ENCODE measurements at regions of chr9 and their contacts with region 1.

Region 1: GRCh38 chr9:128034821-128035764 is 32.0 kb downstream of the NAIF1 start:
- DNase-seq: peak; percentile 78 to 82 (median 80)
- H3K4me3 ChIP-seq: no peak overlapping the region
- H3K4me3 Mint-ChIP-seq: peak overlapping the region; percentile 11 to 84 (median 64)
- H3K27ac ChIP-seq: peak overlapping the region; percentile 15
- H3K27ac Mint-ChIP-seq: peak overlapping the region; percentile 87 to 95 (median 92)
- H3K4me1 ChIP-seq: peaks cover 51% of the 10 kb centered on the region
- H3K4me1 Mint-ChIP-seq: peaks cover 19 to 46% (median 32%) of the 10 kb centered on the region in 4 donors
- H3K27me3 ChIP-seq: no peaks in the 10 kb centered on the region
- H3K27me3 Mint-ChIP-seq: no peaks in the 10 kb centered on the region

Region 2: GRCh38 chr9:127785023-127785932 is 249.8 kb before region 1 on chr9:
- CTCF ChIA-PET with region 1: no interaction called
- POLR2A ChIA-PET with region 1: interaction called, 3 read pairs
- intact Hi-C with region 1: loop called (anchors 10 kb)
- DNase-seq: peak; percentile 89 to 93 (median 90)
- H3K4me3 ChIP-seq: peak overlapping the region in 1 of 2 donors; percentile 61
- H3K4me3 Mint-ChIP-seq: peak overlapping the region; percentile 80 to 93 (median 86)
- H3K27ac ChIP-seq: peak overlapping the region; percentile 86
- H3K27ac Mint-ChIP-seq: peak overlapping the region; percentile 93 to 99 (median 97)
- H3K4me1 ChIP-seq: peaks cover 68% of the 10 kb centered on the region
- H3K4me1 Mint-ChIP-seq: peaks cover 34 to 74% (median 49%) of the 10 kb centered on the region in 4 donors
- H3K27me3 ChIP-seq: no peaks in the 10 kb centered on the region
- H3K27me3 Mint-ChIP-seq: no peaks in the 10 kb centered on the region

Region 3: GRCh38 chr9:127937388-127938280 is 97.5 kb before region 1 on chr9 and contains the start of gene DPM2:
- CTCF ChIA-PET with region 1: interaction called, 216 read pairs
- POLR2A ChIA-PET with region 1: interaction called, 130 read pairs
- intact Hi-C with region 1: no loop called
- DNase-seq: peak; percentile 85 to 89 (median 87)
- H3K4me3 ChIP-seq: peak within 1 kb of the TSS; percentile 37 to 73
- H3K4me3 Mint-ChIP-seq: peak within 1 kb of the TSS; percentile 88 to 98 (median 91)
- H3K27ac ChIP-seq: peak within 1 kb of the TSS; percentile 75
- H3K27ac Mint-ChIP-seq: peak within 1 kb of the TSS; percentile 89 to 97 (median 97)
- H3K4me1 ChIP-seq: peaks cover 37% of the 10 kb centered on the region
- H3K4me1 Mint-ChIP-seq: peaks cover 23 to 53% (median 41%) of the 10 kb centered on the region in 4 donors
- H3K27me3 ChIP-seq: no peaks in the 10 kb centered on the region
- H3K27me3 Mint-ChIP-seq: no peaks in the 10 kb centered on the region
- total RNA-seq, gene DPM2: 37.0 to 39.7 TPM

Region 4: DNA sequence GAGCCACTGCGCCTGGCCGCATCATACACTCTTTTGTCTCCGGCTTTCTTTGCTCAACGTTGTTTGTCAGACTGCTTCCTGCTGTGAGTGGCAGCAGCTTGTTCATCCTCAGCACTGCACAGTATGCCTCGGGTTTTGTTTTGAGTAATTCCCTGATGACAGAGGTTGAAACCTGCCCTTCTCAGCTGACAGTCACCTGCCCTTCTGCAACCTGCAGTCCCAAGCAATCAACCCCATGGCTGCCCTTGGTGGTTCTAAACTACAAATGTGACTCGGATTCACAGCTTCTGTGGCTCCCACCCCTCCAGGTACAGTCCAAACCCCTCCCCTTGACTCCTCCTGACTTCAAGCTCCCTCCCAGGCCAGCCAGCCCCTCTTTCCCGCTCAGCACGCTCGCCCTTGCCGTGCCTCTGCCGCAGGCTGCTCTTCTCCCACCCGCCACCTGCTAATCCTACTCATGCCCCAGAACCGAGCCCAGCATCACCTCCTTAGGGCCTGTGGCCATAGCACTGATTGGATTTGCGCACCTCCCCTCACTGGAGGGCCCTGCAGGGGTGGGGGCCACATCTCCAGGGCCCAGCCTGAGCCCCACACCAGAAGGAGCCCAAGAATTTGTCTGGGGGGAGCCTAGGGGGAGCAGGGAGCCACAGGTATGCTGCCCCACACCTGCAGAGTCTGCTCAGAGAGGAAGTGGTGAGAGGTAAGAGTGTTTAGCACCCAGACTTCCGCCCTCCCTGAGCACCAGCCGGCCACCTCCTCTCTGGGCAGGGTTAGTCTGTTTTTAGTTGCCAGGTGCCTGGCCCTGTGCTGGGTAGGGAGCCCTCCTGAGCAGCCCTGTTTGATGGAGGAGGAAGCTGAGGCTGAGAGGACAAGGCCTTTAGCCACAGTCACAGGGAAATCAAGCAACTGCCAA is 64.4 kb before region 1 on chr9:
- CTCF ChIA-PET with region 1: interaction called, 182 read pairs
- POLR2A ChIA-PET with region 1: interaction called, 1,317 read pairs
- intact Hi-C with region 1: loop called (anchors 1 kb)
- DNase-seq: peak; percentile 72 to 89 (median 73)
- H3K4me3 ChIP-seq: peak overlapping the region; percentile 61 to 76
- H3K4me3 Mint-ChIP-seq: peak overlapping the region; percentile 78 to 98 (median 93)
- H3K27ac ChIP-seq: peak overlapping the region; percentile 78
- H3K27ac Mint-ChIP-seq: peak overlapping the region; percentile 81 to 99 (median 97)
- H3K4me1 ChIP-seq: peaks cover 100% of the 10 kb centered on the region
- H3K4me1 Mint-ChIP-seq: peaks cover 73 to 100% (median 87%) of the 10 kb centered on the region in 4 donors
- H3K27me3 ChIP-seq: no peaks in the 10 kb centered on the region
- H3K27me3 Mint-ChIP-seq: no peaks in the 10 kb centered on the region

Region 5: GRCh38 chr9:128001779-128002298 is 33.3 kb before region 1 on chr9:
- CTCF ChIA-PET with region 1: interaction called, 12 read pairs
- POLR2A ChIA-PET with region 1: interaction called, 313 read pairs
- intact Hi-C with region 1: loop called (anchors 1 kb)
- DNase-seq: no peak
- H3K4me3 ChIP-seq: no peak overlapping the region
- H3K4me3 Mint-ChIP-seq: no peak overlapping the region
- H3K27ac ChIP-seq: no peak overlapping the region
- H3K27ac Mint-ChIP-seq: peak overlapping the region in 3 of 7 donors; percentile 19 to 68 (median 65)
- H3K4me1 ChIP-seq: peaks cover 37% of the 10 kb centered on the region
- H3K4me1 Mint-ChIP-seq: peaks cover 13 to 50% (median 32%) of the 10 kb centered on the region in 4 donors
- H3K27me3 ChIP-seq: no peaks in the 10 kb centered on the region
- H3K27me3 Mint-ChIP-seq: no peaks in the 10 kb centered on the region

Region 6: DNA sequence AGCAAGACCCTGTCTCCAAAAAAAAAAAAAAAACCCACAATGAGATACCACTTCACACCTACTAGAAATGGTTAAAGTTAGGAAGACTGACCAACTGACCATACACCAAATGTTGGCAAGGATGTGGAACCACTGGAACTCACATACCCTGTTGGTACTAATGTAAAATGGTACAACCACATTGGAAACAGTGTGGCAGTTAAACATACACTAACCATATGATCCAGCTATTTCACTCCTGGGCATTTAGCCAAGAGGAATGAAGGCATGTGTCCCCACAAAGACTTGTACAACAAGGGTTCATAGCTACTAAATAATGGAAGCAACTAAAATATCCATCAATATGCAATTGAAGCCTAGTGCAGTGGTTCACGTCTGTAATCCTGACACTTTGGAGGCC is 10.7 kb after region 1 on chr9:
- CTCF ChIA-PET with region 1: interaction called, 13 read pairs
- POLR2A ChIA-PET with region 1: interaction called, 3 read pairs
- intact Hi-C with region 1: no loop called
- DNase-seq: no peak
- H3K4me3 ChIP-seq: no peak overlapping the region
- H3K4me3 Mint-ChIP-seq: no peak overlapping the region
- H3K27ac ChIP-seq: no peak overlapping the region
- H3K27ac Mint-ChIP-seq: no peak overlapping the region
- H3K4me1 ChIP-seq: no peaks in the 10 kb centered on the region
- H3K4me1 Mint-ChIP-seq: peaks cover 0 to 5% (median 0%) of the 10 kb centered on the region in 4 donors
- H3K27me3 ChIP-seq: no peaks in the 10 kb centered on the region
- H3K27me3 Mint-ChIP-seq: peaks cover 0 to 2% of the 10 kb centered on the region in 2 donors

Region 7: GRCh38 chr9:128081056-128081455 is 46.0 kb after region 1 on chr9:
- CTCF ChIA-PET with region 1: interaction called, 10 read pairs
- POLR2A ChIA-PET with region 1: interaction called, 3 read pairs
- intact Hi-C with region 1: loop called (anchors 5 kb)
- DNase-seq: no peak
- H3K4me3 ChIP-seq: no peak overlapping the region
- H3K4me3 Mint-ChIP-seq: peak overlapping the region in 1 of 8 donors; percentile 22
- H3K27ac ChIP-seq: no peak overlapping the region
- H3K27ac Mint-ChIP-seq: peak overlapping the region; percentile 3 to 83 (median 57)
- H3K4me1 ChIP-seq: peaks cover 52% of the 10 kb centered on the region
- H3K4me1 Mint-ChIP-seq: peaks cover 42 to 67% (median 54%) of the 10 kb centered on the region in 4 donors
- H3K27me3 ChIP-seq: no peaks in the 10 kb centered on the region
- H3K27me3 Mint-ChIP-seq: no peaks in the 10 kb centered on the region